ENCODE measurements at regions of chr16 and their contacts with region 1.

Region 1: DNA sequence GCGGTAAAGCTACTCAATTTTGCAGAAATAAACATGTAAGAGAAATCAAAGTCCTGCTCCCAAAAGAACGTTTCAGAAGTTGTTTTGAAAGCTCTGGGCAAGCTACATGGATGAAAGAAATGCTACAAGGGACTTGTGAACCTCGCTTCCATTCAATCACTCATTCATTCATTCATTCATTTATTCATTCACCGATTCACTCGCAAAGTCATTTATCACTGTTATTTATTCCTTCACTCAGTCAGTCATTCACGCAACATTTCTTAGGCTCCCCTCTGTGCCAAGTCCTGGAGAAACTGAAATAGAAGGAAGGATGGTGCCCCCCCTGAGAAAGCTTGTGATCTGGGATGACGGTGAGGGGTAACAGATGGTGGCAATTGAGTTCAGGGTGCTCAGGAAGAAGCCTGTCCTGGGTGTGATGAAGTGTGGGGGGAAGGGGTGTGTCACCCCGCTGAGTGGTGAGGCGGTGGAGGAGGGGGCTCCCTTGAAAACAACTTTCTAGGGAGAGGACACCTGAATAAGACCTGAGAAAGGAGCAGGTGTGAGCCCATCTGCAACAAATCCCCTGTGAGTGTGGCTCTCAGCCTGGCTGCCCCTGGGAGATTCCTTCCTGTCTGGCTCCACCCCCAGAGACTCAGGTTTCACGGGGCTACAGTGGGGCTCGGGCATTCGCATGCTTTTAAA is 36.3 kb upstream of the PRSS54 start:
- DNase-seq: no peak
- ATAC-seq: no peak
- H3K4me3 ChIP-seq: no peak overlapping the region
- H3K27ac ChIP-seq: no peak overlapping the region
- H3K4me1 ChIP-seq: no peaks in the 10 kb centered on the region
- H3K27me3 ChIP-seq: peaks cover 12% of the 10 kb centered on the region
- CTCF ChIP-seq: no peak
- POLR2A ChIP-seq: no peak
- RAD21 ChIP-seq: no peak

Region 2: DNA sequence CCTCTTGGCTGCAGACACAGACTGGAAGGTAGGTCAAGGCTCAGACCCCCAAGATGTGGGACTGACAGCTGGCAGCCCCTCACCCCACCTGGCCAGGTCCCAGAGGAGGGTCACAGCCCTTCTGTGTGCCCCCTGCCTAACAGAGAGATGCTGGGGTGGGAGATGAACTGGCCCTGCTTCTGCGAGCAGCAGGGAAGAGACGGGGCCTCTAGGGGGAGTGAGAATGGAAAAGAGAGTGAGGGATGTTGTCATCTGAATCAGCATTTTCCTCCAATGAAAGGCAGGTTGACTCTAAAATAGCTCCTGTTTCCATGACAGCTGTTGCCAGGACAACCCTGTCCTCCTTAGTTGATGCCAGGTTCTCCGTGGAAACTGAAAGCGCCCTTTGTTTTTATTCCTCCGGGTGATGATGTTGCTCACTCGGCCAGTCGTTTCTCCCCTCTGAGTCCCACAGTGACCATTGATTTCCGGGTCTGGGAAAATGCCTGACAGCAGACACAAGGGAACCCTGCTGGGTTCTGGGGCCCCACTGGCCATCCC is 163.9 kb after region 1 on chr16:
- CTCF ChIA-PET with region 1: interaction called, 5 read pairs
- POLR2A ChIA-PET with region 1: no interaction called
- dilution Hi-C with region 1: no loop called
- in situ Hi-C with region 1: loop called (anchors 5 kb)
- intact Hi-C with region 1: no loop called
- DNase-seq: peak; percentile 99
- ATAC-seq: peak; percentile 84
- H3K4me3 ChIP-seq: no peak overlapping the region
- H3K27ac ChIP-seq: 0 out of 2 replicates have a peak overlapping the region, but pooled peaks have one; percentile 2
- H3K4me1 ChIP-seq: peaks cover 7% of the 10 kb centered on the region; the same call in 1 of the 2 replicates
- H3K27me3 ChIP-seq: peaks cover 3% of the 10 kb centered on the region; the same call in 1 of the 2 replicates
- CTCF ChIP-seq: peak; percentile 78
- POLR2A ChIP-seq: peak; percentile 63; the same call in 1 of the 2 replicates
- RAD21 ChIP-seq: 0 out of 2 replicates have a peak, but pooled peaks have one; percentile 11

Region 3: DNA sequence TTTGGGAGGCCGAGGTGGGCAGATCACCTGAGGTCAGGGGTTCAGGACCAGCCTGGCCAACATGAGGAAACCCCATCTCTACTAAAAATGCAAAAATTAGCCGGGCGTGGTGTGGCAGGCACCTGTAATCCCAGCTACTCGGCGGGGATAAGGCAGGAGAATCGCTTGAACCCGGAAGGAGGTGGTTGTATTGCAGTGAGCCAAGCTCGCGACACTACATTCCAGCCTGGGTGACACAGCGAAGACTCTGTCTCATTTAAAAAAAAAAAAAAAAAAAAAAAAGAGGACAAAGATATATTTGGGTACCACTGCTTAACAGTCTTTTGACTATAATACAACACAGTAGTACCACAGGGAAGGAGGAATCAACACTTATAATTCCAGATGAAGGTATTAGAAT is 289.2 kb after region 1 on chr16:
- CTCF ChIA-PET with region 1: no interaction called
- POLR2A ChIA-PET with region 1: no interaction called
- dilution Hi-C with region 1: no loop called
- in situ Hi-C with region 1: no loop called
- intact Hi-C with region 1: no loop called
- DNase-seq: no peak
- ATAC-seq: no peak
- H3K4me3 ChIP-seq: no peak overlapping the region
- H3K27ac ChIP-seq: no peak overlapping the region
- H3K4me1 ChIP-seq: no peaks in the 10 kb centered on the region
- H3K27me3 ChIP-seq: no peaks in the 10 kb centered on the region
- CTCF ChIP-seq: no peak
- POLR2A ChIP-seq: no peak
- RAD21 ChIP-seq: no peak